ENCODE measurements at regions of chr3 and their contacts with region 1.

Region 1: GRCh38 chr3:98540346-98540745 is 8.6 kb downstream of the GPR15 start:
- DNase-seq: peak; percentile 41
- ATAC-seq: peak; percentile 47
- H3K4me3 Mint-ChIP-seq: no peak overlapping the region
- H3K27ac Mint-ChIP-seq: peak overlapping the region; percentile 67
- H3K4me1 Mint-ChIP-seq: peaks cover 68% of the 10 kb centered on the region
- H3K27me3 Mint-ChIP-seq: no peaks in the 10 kb centered on the region
- CTCF ChIP-seq: no peak

Region 2: DNA sequence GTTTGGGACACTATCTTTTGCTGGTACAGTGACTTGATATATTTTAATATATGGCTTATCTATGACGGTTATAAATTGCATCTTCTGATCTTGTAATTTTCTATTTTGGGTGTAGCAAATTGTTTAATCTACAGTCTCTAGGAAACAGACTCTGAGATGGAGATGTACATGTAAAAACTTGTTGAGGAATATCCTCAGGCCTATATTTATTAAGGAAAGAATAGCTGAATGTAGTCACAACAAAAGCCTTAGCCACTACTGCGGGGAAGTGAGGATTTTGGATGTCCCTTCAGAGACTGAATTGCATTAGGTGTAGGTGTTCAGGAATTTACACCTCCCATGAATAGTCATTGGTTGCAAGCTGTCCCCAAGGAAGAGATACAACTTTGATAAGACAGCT is 163.7 kb before region 1 on chr3:
- CTCF ChIA-PET with region 1: no interaction called
- POLR2A ChIA-PET with region 1: no interaction called
- intact Hi-C with region 1: no loop called
- DNase-seq: no peak
- ATAC-seq: no peak
- H3K4me3 Mint-ChIP-seq: no peak overlapping the region
- H3K27ac Mint-ChIP-seq: no peak overlapping the region
- H3K4me1 Mint-ChIP-seq: no peaks in the 10 kb centered on the region
- H3K27me3 Mint-ChIP-seq: no peaks in the 10 kb centered on the region
- CTCF ChIP-seq: no peak

Region 3: DNA sequence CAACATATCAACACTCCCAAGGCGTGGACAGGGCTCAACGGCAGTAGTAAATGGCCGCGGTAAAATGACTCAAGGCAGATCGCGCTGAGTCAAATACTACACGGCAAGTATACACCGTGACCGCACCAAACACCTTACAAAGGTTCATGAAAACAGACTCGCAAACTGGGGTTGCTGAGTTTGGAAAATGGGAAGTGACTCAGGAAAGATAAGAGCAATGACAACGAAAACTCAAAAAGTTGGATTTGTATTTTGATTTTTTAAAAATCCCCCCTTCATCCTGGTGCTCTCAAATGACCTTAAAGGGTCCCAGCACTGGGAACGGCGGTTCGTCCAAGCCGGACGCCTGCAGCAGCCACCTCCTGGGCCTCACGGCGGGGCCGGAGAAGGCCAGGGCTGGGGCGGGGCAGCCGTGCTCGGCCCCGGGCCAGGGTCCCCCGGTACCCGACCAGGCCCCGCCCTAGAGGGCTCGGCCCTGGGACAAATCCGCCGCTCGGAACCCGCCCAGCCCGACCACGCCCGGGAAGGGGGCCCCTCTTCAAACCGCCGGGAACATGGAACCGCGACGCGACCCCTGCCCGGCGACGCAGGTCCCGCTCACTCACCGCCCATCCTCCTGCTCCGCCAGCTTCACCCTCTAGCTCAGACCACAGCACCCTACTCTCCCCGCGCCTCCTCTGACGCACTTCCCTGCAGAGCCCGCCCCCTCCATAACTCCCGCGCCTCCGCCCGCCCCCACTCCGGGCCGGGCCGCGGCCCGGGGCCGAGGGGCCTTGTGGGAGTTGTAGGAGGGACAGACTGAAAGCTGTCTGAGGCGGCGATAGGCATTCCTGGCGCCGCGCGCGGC is 17.9 kb before region 1 on chr3 and contains the start of gene CLDND1:
- CTCF ChIA-PET with region 1: interaction called, 6 read pairs
- POLR2A ChIA-PET with region 1: interaction called, 27 read pairs
- intact Hi-C with region 1: loop called (anchors 2 kb)
- DNase-seq: peak; percentile 97
- ATAC-seq: peak; percentile 96
- H3K4me3 Mint-ChIP-seq: peak within 1 kb of the TSS; percentile 89
- H3K27ac Mint-ChIP-seq: peak within 1 kb of the TSS; percentile 95
- H3K4me1 Mint-ChIP-seq: peaks cover 62% of the 10 kb centered on the region
- H3K27me3 Mint-ChIP-seq: no peaks in the 10 kb centered on the region
- CTCF ChIP-seq: no peak
- total RNA-seq, gene CLDND1: 190 to 198 TPM

Region 4: GRCh38 chr3:98556164-98557130 is 16.1 kb after region 1 on chr3:
- CTCF ChIA-PET with region 1: interaction called, 7 read pairs
- POLR2A ChIA-PET with region 1: interaction called, 204 read pairs
- intact Hi-C with region 1: loop called (anchors 1 kb)
- DNase-seq: peak; percentile 91
- ATAC-seq: peak; percentile 73
- H3K4me3 Mint-ChIP-seq: peak overlapping the region; percentile 67
- H3K27ac Mint-ChIP-seq: peak overlapping the region; percentile 97
- H3K4me1 Mint-ChIP-seq: peaks cover 82% of the 10 kb centered on the region
- H3K27me3 Mint-ChIP-seq: no peaks in the 10 kb centered on the region
- CTCF ChIP-seq: no peak

Region 5: DNA sequence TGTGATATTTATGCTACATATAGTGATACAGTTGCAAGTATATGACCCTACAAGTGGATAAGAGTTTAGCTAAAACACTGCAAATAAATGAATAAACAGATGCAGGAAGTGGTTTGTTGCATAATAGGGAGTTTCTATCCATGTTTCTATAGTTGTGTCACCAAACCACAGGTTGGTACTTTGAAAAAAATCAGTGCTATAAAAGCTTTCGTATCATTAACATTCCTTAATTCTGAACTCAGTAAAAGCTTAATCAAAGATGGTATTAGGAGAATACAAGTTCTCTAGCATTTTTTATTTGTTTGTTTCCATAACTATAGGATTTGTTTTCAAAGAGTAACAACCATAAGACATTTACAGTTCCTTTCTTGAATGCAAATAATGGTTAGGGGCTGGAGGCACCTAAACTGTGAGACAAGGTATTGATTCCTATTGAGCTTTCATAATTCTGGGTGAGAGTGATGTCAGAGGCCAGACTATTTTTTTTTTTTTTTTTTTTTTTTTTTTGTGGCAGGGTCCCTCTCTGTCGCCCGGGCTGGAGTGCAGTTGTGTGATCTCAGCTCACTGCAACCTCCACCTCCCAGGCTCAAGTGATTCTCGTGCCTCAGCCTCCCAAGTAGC is 23.4 kb after region 1 on chr3:
- CTCF ChIA-PET with region 1: interaction called, 6 read pairs
- POLR2A ChIA-PET with region 1: interaction called, 204 read pairs
- intact Hi-C with region 1: loop called (anchors 1 kb)
- DNase-seq: peak; percentile 32
- ATAC-seq: peak; percentile 16
- H3K4me3 Mint-ChIP-seq: no peak overlapping the region
- H3K27ac Mint-ChIP-seq: peak overlapping the region; percentile 94
- H3K4me1 Mint-ChIP-seq: peaks cover 84% of the 10 kb centered on the region
- H3K27me3 Mint-ChIP-seq: no peaks in the 10 kb centered on the region
- CTCF ChIP-seq: no peak

Region 6: GRCh38 chr3:98602078-98602678 is 61.8 kb after region 1 on chr3:
- CTCF ChIA-PET with region 1: interaction called, 10 read pairs
- POLR2A ChIA-PET with region 1: no interaction called
- intact Hi-C with region 1: no loop called
- DNase-seq: peak; percentile 41
- ATAC-seq: peak; percentile 60
- H3K4me3 Mint-ChIP-seq: no peak overlapping the region
- H3K27ac Mint-ChIP-seq: no peak overlapping the region
- H3K4me1 Mint-ChIP-seq: peaks cover 3% of the 10 kb centered on the region
- H3K27me3 Mint-ChIP-seq: peaks cover 3% of the 10 kb centered on the region
- CTCF ChIP-seq: peak; percentile 76

Measured in activated CD8-positive, alpha-beta T cell treated with anti-CD3 and anti-CD28 coated beads for 36 hours (primary cell).